Mammary epithelial cell (primary cell): ENCODE measurements at regions of chr12 and their contacts with region 1.

Region 1: GRCh38 chr12:90854136-90854689 is 100.8 kb downstream of the CCER1 start:
- DNase-seq: peak; percentile 25
- H3K4me3 ChIP-seq: no peak overlapping the region
- H3K27ac ChIP-seq: no peak overlapping the region
- H3K4me1 ChIP-seq: no peaks in the 10 kb centered on the region
- H3K27me3 ChIP-seq: no peaks in the 10 kb centered on the region
- CTCF ChIP-seq: peak; percentile 78 to 81

Region 2: DNA sequence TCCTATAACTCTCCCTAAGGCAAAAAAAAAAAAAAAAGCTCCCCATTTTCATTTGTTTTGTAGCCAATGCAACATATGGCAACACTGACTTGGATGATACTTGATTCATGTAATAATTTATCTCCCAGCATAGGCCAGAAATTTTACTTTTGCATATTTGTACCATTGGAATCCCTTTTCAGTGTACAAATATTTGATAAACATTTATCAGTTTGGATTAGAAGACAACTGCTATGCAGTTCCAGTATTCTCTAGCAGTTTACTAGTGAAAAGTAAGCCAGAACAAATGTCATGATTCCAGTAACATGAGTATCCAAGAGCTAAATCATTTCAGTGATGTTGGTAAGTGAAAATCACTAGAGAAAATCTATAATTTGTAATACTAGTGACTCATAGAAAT is 291.5 kb before region 1 on chr12:
- CTCF ChIA-PET with region 1: no interaction called
- dilution Hi-C with region 1: no loop called
- in situ Hi-C with region 1: no loop called
- intact Hi-C with region 1: no loop called
- DNase-seq: no peak
- H3K4me3 ChIP-seq: no peak overlapping the region
- H3K27ac ChIP-seq: no peak overlapping the region
- H3K4me1 ChIP-seq: no peaks in the 10 kb centered on the region
- H3K27me3 ChIP-seq: no peaks in the 10 kb centered on the region
- CTCF ChIP-seq: no peak

Region 3: GRCh38 chr12:90695415-90695814 is 158.8 kb before region 1 on chr12:
- CTCF ChIA-PET with region 1: interaction called, 7 read pairs
- dilution Hi-C with region 1: no loop called
- in situ Hi-C with region 1: no loop called
- intact Hi-C with region 1: loop called (anchors 5 kb)
- DNase-seq: no peak
- H3K4me3 ChIP-seq: no peak overlapping the region
- H3K27ac ChIP-seq: no peak overlapping the region
- H3K4me1 ChIP-seq: no peaks in the 10 kb centered on the region
- H3K27me3 ChIP-seq: no peaks in the 10 kb centered on the region
- CTCF ChIP-seq: peak; percentile 27 to 50

Region 4: DNA sequence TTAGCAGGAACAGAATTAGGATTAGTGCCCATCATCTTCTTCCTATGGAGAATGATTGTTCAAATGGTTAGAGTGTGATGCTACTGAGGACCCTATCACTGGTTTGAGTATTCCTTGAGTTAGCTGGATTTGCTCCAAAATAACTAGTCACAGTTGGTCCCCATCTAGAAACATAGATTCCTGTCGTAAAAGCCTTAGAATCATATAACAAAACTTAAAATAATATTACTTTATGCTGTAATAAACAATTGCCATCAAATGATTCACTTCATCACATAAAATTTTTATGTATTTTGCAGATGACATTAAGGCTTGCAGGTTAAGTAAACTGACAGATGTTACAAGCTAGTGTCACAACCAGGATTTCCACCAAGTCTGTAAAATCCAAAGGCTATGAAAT is 109.0 kb before region 1 on chr12:
- CTCF ChIA-PET with region 1: no interaction called
- dilution Hi-C with region 1: no loop called
- in situ Hi-C with region 1: no loop called
- intact Hi-C with region 1: no loop called
- DNase-seq: no peak
- H3K4me3 ChIP-seq: no peak overlapping the region
- H3K27ac ChIP-seq: no peak overlapping the region
- H3K4me1 ChIP-seq: no peaks in the 10 kb centered on the region
- H3K27me3 ChIP-seq: peaks cover 2% of the 10 kb centered on the region
- CTCF ChIP-seq: no peak